GM12878 (cell line): ENCODE measurements at regions of chr11 and their contacts with region 1.

Region 1: GRCh38 chr11:120400564-120401364 is 64.6 kb downstream of the ARHGEF12 start:
- DNase-seq: peak; percentile 51
- ATAC-seq: peak; percentile 88
- H3K4me3 ChIP-seq: peak overlapping the region; percentile 10; the same call in 1 of the 2 replicates
- H3K27ac ChIP-seq: peak overlapping the region; percentile 48
- H3K4me1 ChIP-seq: peaks cover 8% of the 10 kb centered on the region
- H3K27me3 ChIP-seq: no peaks in the 10 kb centered on the region
- CTCF ChIP-seq: no peak
- EP300 ChIP-seq: peak in 1 of 2 experiments; percentile 34; a peak in 2 of 4 replicates
- POLR2A ChIP-seq: no peak
- RAD21 ChIP-seq: no peak

Region 2: DNA sequence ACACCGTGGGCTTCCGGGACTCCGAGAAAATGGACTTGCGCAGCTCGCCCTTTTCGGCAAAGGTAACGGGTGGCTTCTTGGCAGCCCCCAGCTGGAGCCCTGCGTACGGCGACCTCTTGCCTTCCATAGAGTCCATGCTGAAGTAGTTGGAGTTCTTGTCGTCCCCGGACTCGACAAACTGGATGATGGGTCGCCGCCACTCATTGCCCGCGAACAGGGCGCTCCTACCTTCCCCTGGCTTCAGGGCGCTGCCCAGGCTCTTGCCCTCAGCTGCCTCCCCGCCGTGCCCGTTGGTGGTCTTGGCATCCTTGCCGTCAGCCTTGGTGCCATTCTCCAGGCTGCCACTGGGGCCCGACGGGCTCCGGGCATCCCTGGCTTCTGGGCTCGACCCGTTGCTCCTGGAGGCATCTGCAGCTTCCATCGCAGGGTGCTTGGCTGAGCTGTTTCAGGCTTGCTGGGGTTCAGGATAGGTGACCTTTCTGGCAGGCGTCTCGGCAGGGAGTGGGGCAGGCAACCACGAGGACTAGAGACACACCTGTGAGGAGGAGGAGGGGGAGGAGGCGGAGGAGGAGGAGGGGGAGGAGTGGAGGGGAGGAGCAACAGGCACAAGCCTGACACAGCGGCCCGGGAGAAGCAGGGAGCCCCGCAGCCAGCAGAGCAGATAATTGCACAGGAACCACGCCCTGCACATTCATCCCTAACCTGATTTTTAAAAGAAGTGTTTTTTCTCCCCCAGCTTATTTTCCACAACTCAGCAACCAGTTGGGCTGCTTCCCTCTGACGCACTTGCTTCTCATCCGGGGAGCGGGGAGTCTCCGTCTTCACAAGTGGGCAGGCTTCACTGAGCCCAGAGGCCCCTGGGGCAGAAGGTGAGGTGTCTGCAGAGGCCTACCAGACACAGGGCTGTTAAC is 262.9 kb before region 1 on chr11 and contains the start of gene TRIM29:
- CTCF ChIA-PET with region 1: no interaction called
- POLR2A ChIA-PET with region 1: no interaction called
- RAD21 ChIA-PET with region 1: no interaction called
- SMC1A ChIA-PET with region 1: no interaction called
- in situ Hi-C with region 1: no loop called
- intact Hi-C with region 1: no loop called
- DNase-seq: no peak
- ATAC-seq: no peak
- H3K4me3 ChIP-seq: no peak within 1 kb of the TSS
- H3K27ac ChIP-seq: no peak within 1 kb of the TSS
- H3K4me1 ChIP-seq: no peaks in the 10 kb centered on the region
- H3K27me3 ChIP-seq: peaks cover 6 to 13% of the 10 kb centered on the region in 2 experiments; a peak in 3 of 4 replicates
- CTCF ChIP-seq: no peak
- EP300 ChIP-seq: no peak
- POLR2A ChIP-seq: no peak
- RAD21 ChIP-seq: no peak
- polyA plus RNA-seq, gene TRIM29: not detected

Region 3: GRCh38 chr11:120151536-120151935 is 249.2 kb before region 1 on chr11:
- CTCF ChIA-PET with region 1: no interaction called
- POLR2A ChIA-PET with region 1: no interaction called
- RAD21 ChIA-PET with region 1: no interaction called
- SMC1A ChIA-PET with region 1: no interaction called
- in situ Hi-C with region 1: no loop called
- intact Hi-C with region 1: no loop called
- DNase-seq: no peak
- ATAC-seq: no peak
- H3K4me3 ChIP-seq: no peak overlapping the region
- H3K27ac ChIP-seq: no peak overlapping the region
- H3K4me1 ChIP-seq: no peaks in the 10 kb centered on the region
- H3K27me3 ChIP-seq: no peaks in the 10 kb centered on the region
- CTCF ChIP-seq: no peak
- EP300 ChIP-seq: no peak
- POLR2A ChIP-seq: no peak
- RAD21 ChIP-seq: no peak

Region 4: GRCh38 chr11:120248551-120249278 is 152.0 kb before region 1 on chr11:
- CTCF ChIA-PET with region 1: no interaction called
- POLR2A ChIA-PET with region 1: interaction called, 10 read pairs
- RAD21 ChIA-PET with region 1: no interaction called
- SMC1A ChIA-PET with region 1: no interaction called
- in situ Hi-C with region 1: no loop called
- intact Hi-C with region 1: no loop called
- DNase-seq: peak; percentile 93
- ATAC-seq: peak; percentile 87
- H3K4me3 ChIP-seq: peak overlapping the region; percentile 34; the same call in 1 of the 2 replicates
- H3K27ac ChIP-seq: peak overlapping the region; percentile 39
- H3K4me1 ChIP-seq: peaks cover 37% of the 10 kb centered on the region
- H3K27me3 ChIP-seq: no peaks in the 10 kb centered on the region; a peak in 1 of 4 replicates
- CTCF ChIP-seq: no peak
- EP300 ChIP-seq: peak; percentile 91 to 95; a peak in 3 of 4 replicates
- POLR2A ChIP-seq: no peak
- RAD21 ChIP-seq: no peak

Region 5: DNA sequence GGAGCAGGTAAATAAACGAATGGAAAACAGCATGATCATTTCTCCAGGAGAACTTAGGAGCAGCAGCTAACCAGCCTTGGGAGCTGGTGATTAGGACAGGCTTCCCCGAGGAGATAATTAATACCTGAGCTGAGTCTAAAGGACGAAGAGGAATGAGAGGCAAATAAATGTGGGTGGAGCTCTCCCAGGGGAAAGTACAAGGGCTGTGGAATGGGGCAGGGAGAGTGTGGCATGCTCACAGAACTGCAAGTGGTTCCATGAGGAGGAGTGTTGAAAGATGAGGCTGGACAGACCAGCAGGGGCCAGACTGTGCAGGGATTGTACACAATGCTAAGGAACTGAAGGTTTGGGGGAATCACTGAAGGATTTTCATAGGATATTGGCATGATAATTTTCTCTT is 89.9 kb before region 1 on chr11:
- CTCF ChIA-PET with region 1: no interaction called
- POLR2A ChIA-PET with region 1: no interaction called
- RAD21 ChIA-PET with region 1: no interaction called
- SMC1A ChIA-PET with region 1: no interaction called
- in situ Hi-C with region 1: no loop called
- intact Hi-C with region 1: no loop called
- DNase-seq: no peak
- ATAC-seq: no peak
- H3K4me3 ChIP-seq: no peak overlapping the region
- H3K27ac ChIP-seq: no peak overlapping the region
- H3K4me1 ChIP-seq: no peaks in the 10 kb centered on the region
- H3K27me3 ChIP-seq: peaks cover 0 to 3% of the 10 kb centered on the region in 2 experiments; a peak in 1 of 4 replicates
- CTCF ChIP-seq: no peak
- EP300 ChIP-seq: no peak
- POLR2A ChIP-seq: no peak
- RAD21 ChIP-seq: no peak

Region 6: DNA sequence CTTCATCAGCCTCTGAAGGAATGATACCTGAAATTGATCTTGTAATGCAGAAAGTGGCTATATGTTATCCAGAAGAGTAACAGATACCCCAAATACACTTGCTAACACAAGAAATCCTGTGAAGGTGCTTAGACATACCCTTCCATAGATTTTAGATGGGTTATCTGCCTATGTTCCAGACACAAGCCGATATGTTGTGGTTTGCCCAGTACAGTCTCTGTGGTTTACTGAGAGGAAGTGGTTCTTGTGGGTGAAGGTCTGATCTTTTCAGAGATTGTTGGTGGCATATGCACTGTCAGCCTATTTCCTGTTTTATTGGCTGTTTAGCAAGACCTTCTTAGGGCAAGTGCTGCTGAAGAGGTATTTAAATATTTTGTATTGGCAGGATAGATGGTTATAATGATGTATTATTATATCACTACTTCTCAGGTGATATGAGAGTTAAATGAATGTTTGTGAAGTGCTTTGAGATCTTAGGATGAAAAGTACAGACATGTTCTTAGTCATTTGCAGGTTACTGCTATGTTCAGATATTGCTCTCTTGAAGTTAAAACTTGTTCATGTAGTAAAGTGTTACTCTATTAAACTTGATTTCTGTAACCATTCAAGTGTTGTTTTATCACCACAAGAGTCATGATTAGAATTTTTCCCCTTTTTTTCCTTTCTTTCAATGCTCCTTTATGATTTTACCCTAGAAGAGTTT is 56.3 kb before region 1 on chr11:
- CTCF ChIA-PET with region 1: interaction called, 7 read pairs
- POLR2A ChIA-PET with region 1: interaction called, 3 read pairs
- RAD21 ChIA-PET with region 1: interaction called, 15 read pairs
- SMC1A ChIA-PET with region 1: interaction called, 37 read pairs
- in situ Hi-C with region 1: no loop called
- intact Hi-C with region 1: loop called (anchors 1 kb)
- DNase-seq: peak; percentile 91
- ATAC-seq: peak; percentile 82
- H3K4me3 ChIP-seq: peak overlapping the region; percentile 46
- H3K27ac ChIP-seq: peak overlapping the region; percentile 59
- H3K4me1 ChIP-seq: peaks cover 25% of the 10 kb centered on the region
- H3K27me3 ChIP-seq: no peaks in the 10 kb centered on the region
- CTCF ChIP-seq: no peak
- EP300 ChIP-seq: peak; percentile 75 to 90
- POLR2A ChIP-seq: no peak
- RAD21 ChIP-seq: no peak

Region 7: GRCh38 chr11:120410622-120411380 is 10.0 kb after region 1 on chr11:
- CTCF ChIA-PET with region 1: interaction called, 15 read pairs
- POLR2A ChIA-PET with region 1: interaction called, 4 read pairs
- RAD21 ChIA-PET with region 1: interaction called, 16 read pairs
- SMC1A ChIA-PET with region 1: interaction called, 28 read pairs
- in situ Hi-C with region 1: no loop called
- intact Hi-C with region 1: no loop called
- DNase-seq: no peak
- ATAC-seq: no peak
- H3K4me3 ChIP-seq: no peak overlapping the region
- H3K27ac ChIP-seq: no peak overlapping the region
- H3K4me1 ChIP-seq: no peaks in the 10 kb centered on the region
- H3K27me3 ChIP-seq: no peaks in the 10 kb centered on the region
- CTCF ChIP-seq: no peak
- EP300 ChIP-seq: no peak
- POLR2A ChIP-seq: no peak
- RAD21 ChIP-seq: no peak

Region 8: GRCh38 chr11:120424185-120424969 is 23.6 kb after region 1 on chr11:
- CTCF ChIA-PET with region 1: interaction called, 5 read pairs
- POLR2A ChIA-PET with region 1: no interaction called
- RAD21 ChIA-PET with region 1: interaction called, 6 read pairs
- SMC1A ChIA-PET with region 1: interaction called, 11 read pairs
- in situ Hi-C with region 1: no loop called
- intact Hi-C with region 1: no loop called
- DNase-seq: no peak
- ATAC-seq: peak; percentile 17; the same call in 1 of the 3 replicates
- H3K4me3 ChIP-seq: no peak overlapping the region
- H3K27ac ChIP-seq: no peak overlapping the region
- H3K4me1 ChIP-seq: peaks cover 3% of the 10 kb centered on the region; the same call in 1 of the 2 replicates
- H3K27me3 ChIP-seq: no peaks in the 10 kb centered on the region
- CTCF ChIP-seq: no peak
- EP300 ChIP-seq: no peak
- POLR2A ChIP-seq: no peak
- RAD21 ChIP-seq: no peak

Region 9: DNA sequence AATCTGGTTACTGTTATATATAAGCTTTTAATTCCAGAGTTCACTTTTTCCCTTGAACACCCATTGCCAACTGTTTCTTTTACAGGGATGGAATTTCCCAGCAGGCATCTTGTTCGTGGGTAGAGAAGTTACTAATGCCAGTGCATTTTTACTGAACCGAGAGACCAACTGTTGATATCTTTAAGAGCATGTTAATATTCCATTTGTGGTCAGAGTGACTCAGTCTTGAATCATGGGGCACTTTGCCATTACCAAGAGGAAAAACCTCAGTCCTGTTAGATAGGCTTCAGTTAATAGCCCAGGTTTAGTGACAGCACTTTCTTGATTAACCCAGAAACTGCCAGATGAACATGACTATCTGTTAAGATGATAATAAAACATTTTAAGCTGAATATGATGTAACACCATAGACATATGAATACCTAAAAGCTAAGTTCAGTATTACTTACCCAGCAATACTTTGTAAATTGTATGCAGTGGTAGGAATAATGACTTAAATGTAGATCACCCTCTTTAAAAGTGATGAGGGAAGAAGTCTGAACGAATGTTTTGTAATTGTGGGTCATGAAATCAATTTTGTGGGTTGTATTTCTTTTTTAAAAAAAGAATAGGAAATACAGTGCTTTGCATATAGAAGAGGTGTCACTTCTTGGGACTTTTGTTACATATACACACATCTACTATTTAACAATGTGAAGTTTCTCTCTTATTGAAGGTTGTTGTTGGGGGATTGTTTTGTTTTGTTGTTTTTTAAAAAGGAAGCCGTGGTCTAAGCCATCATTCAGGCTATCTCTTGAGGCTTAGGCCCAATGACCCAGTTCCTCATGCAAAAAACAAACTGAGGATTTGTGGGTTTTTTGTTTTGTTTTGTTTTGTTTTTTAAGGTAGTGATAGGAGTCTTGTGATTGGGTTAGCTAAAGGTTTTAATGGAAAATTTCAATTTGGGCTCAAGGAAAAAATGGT is 31.6 kb after region 1 on chr11:
- CTCF ChIA-PET with region 1: interaction called, 3 read pairs
- POLR2A ChIA-PET with region 1: interaction called, 5 read pairs
- RAD21 ChIA-PET with region 1: interaction called, 7 read pairs
- SMC1A ChIA-PET with region 1: interaction called, 11 read pairs
- in situ Hi-C with region 1: no loop called
- intact Hi-C with region 1: no loop called
- DNase-seq: peak; percentile 33
- ATAC-seq: peak; percentile 88
- H3K4me3 ChIP-seq: no peak overlapping the region
- H3K27ac ChIP-seq: 0 out of 2 replicates have a peak overlapping the region, but pooled peaks have one; percentile 1
- H3K4me1 ChIP-seq: no peaks in the 10 kb centered on the region
- H3K27me3 ChIP-seq: no peaks in the 10 kb centered on the region
- CTCF ChIP-seq: no peak
- EP300 ChIP-seq: no peak
- POLR2A ChIP-seq: no peak
- RAD21 ChIP-seq: no peak